ENCODE measurements at regions of chr9 and their contacts with region 1.

Region 1: DNA sequence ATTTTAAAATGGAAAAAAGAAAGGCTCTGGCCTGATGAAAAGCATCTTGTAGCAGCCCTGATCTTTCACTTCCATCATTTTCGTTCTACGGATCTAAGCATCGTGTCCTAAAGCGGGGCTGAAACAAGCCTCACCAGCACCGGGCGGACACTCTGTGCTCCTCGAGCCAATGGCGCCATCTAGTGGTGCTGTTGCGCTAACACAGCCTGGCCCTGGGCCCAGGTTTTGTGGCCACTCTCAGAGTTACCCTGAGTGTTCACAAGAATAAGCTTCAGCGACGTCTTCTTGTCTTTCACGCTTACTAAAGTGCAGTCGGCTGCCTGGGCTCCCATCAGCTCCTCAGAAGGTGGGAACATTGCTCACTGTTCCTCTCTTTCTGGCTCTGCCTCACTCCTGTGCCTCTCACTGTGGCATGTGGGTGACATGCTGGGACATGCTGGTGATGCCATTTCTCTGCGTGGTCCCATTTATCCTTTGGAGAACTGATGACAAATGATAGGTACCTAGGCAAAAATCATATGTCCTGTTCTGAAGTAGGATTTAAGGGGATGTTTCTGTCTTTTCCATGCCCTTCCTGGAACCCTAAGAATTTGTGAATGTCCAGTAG is 32.7 kb downstream of the DMRT3 start:
- DNase-seq: peak; percentile 69
- H3K4me3 ChIP-seq: no peak overlapping the region
- H3K27ac ChIP-seq: no peak overlapping the region
- H3K4me1 ChIP-seq: no peaks in the 10 kb centered on the region
- H3K27me3 ChIP-seq: no peaks in the 10 kb centered on the region
- CTCF ChIP-seq: peak; percentile 90 to 95
- POLR2A ChIP-seq: no peak

Region 2: DNA sequence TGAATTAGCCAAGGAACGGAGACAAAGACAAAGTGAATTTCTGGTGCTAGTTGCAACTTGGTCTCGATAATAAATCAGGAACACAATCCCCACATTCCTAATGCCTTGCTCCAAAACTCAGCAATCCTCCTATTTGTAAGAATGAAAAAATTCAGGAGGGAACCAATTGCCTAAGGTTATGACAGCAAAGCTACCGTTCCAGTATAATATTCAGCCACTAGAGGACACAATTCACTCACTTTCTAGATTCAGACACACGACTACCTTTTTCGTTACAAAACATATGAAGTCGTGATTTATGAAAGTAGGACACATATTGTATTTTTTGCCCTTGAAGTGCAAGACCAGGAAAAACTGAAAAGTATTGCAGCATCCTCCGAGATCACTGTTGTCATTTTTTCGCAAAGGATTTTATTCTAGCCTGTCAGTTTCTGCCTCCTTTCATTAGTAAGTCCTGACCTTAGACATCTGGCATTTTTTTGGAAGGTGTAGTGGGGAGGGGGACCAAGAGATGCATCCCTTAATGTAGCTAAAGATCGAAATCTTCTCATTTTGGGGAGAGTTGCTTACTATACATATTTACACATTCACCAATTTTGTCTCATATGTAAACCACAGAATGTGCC is 661.4 kb before region 1 on chr9:
- CTCF ChIA-PET with region 1: interaction called, 25 read pairs
- POLR2A ChIA-PET with region 1: no interaction called
- dilution Hi-C with region 1: no loop called
- intact Hi-C with region 1: loop called (anchors 1 kb)
- DNase-seq: peak; percentile 37
- H3K4me3 ChIP-seq: no peak overlapping the region
- H3K27ac ChIP-seq: no peak overlapping the region
- H3K4me1 ChIP-seq: no peaks in the 10 kb centered on the region
- H3K27me3 ChIP-seq: no peaks in the 10 kb centered on the region
- CTCF ChIP-seq: peak; percentile 32 to 39
- POLR2A ChIP-seq: no peak

Region 3: DNA sequence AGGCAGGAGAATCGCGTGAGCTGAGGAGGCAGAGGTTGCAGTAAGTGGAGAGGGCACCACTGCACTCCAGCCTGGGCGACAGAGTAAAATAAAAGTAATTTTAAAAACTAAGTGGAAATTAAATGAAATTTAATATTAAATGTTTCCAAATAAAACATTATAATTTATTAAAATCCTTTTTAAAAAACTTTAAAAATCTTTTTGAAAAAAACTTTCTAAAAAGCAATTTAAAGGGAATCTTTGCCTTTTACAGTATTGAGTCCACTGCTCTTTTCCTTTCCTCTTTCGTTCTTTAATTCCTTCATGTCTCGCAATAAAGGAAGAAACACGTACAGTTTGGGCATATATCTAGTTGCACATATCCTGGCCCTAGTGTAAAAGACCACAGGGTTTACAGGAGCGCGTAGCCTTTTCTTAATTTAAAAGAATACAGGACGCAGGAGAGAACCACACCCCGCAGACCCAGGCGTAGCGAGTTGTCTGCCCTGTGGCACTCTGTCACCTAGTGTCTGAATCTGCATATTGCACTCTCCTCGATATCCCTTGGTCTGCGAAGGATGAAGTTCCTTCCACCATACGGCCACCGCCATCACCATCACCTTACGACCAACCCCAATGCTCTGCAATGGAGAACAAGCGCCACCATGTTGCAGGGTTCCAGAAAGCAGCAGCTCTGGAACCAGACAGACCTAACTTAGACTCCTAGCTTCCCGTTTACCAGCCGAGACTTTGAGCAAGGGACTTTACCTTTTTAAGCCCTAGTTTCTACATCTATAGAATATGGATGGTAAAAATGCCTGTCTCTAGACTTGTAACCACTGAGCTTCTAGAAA is 245.3 kb before region 1 on chr9:
- CTCF ChIA-PET with region 1: interaction called, 3 read pairs
- POLR2A ChIA-PET with region 1: no interaction called
- dilution Hi-C with region 1: no loop called
- intact Hi-C with region 1: loop called (anchors 5 kb)
- DNase-seq: peak; percentile 90
- H3K4me3 ChIP-seq: peak overlapping the region in 1 of 3 experiments; percentile 20
- H3K27ac ChIP-seq: no peak overlapping the region
- H3K4me1 ChIP-seq: peaks cover 2% of the 10 kb centered on the region
- H3K27me3 ChIP-seq: peaks cover 3% of the 10 kb centered on the region in 2 experiments
- CTCF ChIP-seq: peak; percentile 90 to 96
- POLR2A ChIP-seq: no peak

Region 4: GRCh38 chr9:893843-894420 is 115.3 kb before region 1 on chr9:
- CTCF ChIA-PET with region 1: interaction called, 50 read pairs
- POLR2A ChIA-PET with region 1: interaction called, 3 read pairs
- dilution Hi-C with region 1: no loop called
- intact Hi-C with region 1: loop called (anchors 1 kb)
- DNase-seq: peak; percentile 34
- H3K4me3 ChIP-seq: no peak overlapping the region
- H3K27ac ChIP-seq: no peak overlapping the region
- H3K4me1 ChIP-seq: no peaks in the 10 kb centered on the region
- H3K27me3 ChIP-seq: no peaks in the 10 kb centered on the region
- CTCF ChIP-seq: peak; percentile 63 to 66
- POLR2A ChIP-seq: no peak

Region 5: GRCh38 chr9:982394-983230 is 26.6 kb before region 1 on chr9:
- CTCF ChIA-PET with region 1: interaction called, 10 read pairs
- POLR2A ChIA-PET with region 1: no interaction called
- dilution Hi-C with region 1: no loop called
- intact Hi-C with region 1: no loop called
- DNase-seq: no peak
- H3K4me3 ChIP-seq: no peak overlapping the region
- H3K27ac ChIP-seq: no peak overlapping the region
- H3K4me1 ChIP-seq: no peaks in the 10 kb centered on the region
- H3K27me3 ChIP-seq: peaks cover 40 to 58% of the 10 kb centered on the region in 2 experiments
- CTCF ChIP-seq: no peak
- POLR2A ChIP-seq: no peak

Region 6: DNA sequence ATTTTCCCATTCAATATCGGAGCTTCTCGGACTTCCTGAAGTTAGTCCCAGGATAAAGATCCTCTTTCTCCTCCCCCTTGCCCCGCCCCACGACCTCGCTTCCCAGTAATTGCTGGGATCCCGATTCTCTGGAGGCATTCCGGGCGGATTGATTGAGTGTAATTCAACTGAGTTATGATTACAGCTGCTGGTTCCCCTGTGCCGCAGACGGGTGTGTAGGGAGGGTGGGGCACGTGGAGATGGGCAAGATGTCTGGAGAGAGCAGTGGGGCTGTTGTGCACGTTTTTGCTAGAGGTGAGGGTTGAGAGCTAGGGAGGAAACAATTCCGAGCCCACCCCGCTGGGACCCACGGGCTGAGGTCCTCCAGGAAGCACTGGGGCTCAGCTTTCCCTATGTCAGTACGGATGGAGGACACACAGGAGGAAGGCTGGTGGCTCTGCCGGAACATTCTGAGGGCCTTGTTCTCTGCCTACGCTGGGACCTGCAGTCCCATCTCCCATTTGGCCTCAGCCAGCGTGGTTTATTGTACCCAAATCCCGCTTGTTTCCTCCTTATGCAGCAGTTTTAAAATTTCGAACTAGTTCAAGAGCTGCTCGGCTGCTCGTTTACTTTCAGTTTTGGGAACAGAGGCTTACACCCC is 38.5 kb after region 1 on chr9:
- CTCF ChIA-PET with region 1: interaction called, 11 read pairs
- POLR2A ChIA-PET with region 1: no interaction called
- dilution Hi-C with region 1: no loop called
- intact Hi-C with region 1: no loop called
- DNase-seq: no peak
- H3K4me3 ChIP-seq: peak overlapping the region in 2 of 3 experiments; percentile 1 to 36
- H3K27ac ChIP-seq: no peak overlapping the region
- H3K4me1 ChIP-seq: no peaks in the 10 kb centered on the region
- H3K27me3 ChIP-seq: peaks cover 82 to 97% of the 10 kb centered on the region in 2 experiments
- CTCF ChIP-seq: no peak
- POLR2A ChIP-seq: no peak

Region 7: GRCh38 chr9:1248743-1249142 is 239.5 kb after region 1 on chr9:
- CTCF ChIA-PET with region 1: no interaction called
- POLR2A ChIA-PET with region 1: no interaction called
- dilution Hi-C with region 1: no loop called
- intact Hi-C with region 1: no loop called
- DNase-seq: no peak
- H3K4me3 ChIP-seq: no peak overlapping the region
- H3K27ac ChIP-seq: no peak overlapping the region
- H3K4me1 ChIP-seq: no peaks in the 10 kb centered on the region
- H3K27me3 ChIP-seq: no peaks in the 10 kb centered on the region
- CTCF ChIP-seq: no peak
- POLR2A ChIP-seq: no peak

Measured in endothelial cell of umbilical vein (primary cell).